Upper lobe of right lung (tissue), 1 donor: ENCODE measurements at regions of chr12 and their contacts with region 1.

Region 1: GRCh38 chr12:12999959-13000615 is at the start of gene HEBP1:
- DNase-seq: peak; percentile 98
- ATAC-seq: peak; percentile 97
- H3K4me3 ChIP-seq: peak within 1 kb of the TSS; percentile 93
- H3K27ac ChIP-seq: peak within 1 kb of the TSS; percentile 93
- H3K4me1 ChIP-seq: peaks cover 32% of the 10 kb centered on the region
- H3K27me3 ChIP-seq: no peaks in the 10 kb centered on the region
- CTCF ChIP-seq: no peak
- total RNA-seq, gene HEBP1: 86.2 TPM

Region 2: GRCh38 chr12:13233830-13234641 is 233.9 kb after region 1 on chr12:
- intact Hi-C with region 1: loop called (anchors 10 kb)
- DNase-seq: no peak
- ATAC-seq: peak; percentile 84
- H3K4me3 ChIP-seq: no peak overlapping the region
- H3K27ac ChIP-seq: no peak overlapping the region
- H3K4me1 ChIP-seq: no peaks in the 10 kb centered on the region
- H3K27me3 ChIP-seq: no peaks in the 10 kb centered on the region
- CTCF ChIP-seq: peak; percentile 77

Region 3: DNA sequence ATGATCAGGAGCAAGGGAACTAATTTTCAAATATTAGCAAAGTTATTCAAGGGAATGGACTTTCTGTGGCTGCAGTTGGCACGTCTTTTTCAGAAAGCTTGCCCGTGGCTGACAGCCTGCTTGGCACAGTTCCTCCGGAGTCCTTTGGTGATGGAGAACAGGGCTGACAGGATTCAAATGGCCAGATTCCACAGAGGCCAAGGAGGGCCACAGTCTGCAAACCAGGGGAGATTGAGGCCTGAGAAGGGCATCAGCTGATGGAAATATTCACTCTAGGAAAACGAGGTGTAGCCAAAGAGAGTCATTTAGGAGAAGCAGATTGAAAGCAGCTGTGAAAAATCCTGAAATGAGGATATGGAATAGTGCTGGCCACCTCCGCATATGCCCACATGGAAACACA is 374.7 kb after region 1 on chr12:
- intact Hi-C with region 1: no loop called
- DNase-seq: no peak
- ATAC-seq: no peak
- H3K4me3 ChIP-seq: no peak overlapping the region
- H3K27ac ChIP-seq: no peak overlapping the region
- H3K4me1 ChIP-seq: peaks cover 4% of the 10 kb centered on the region
- H3K27me3 ChIP-seq: no peaks in the 10 kb centered on the region
- CTCF ChIP-seq: no peak